Activated T-helper 2 cell treated with anti-CD3 and anti-CD28 coated beads, Interferon-gamma antibody, Interleukin-2, Interleukin-4, amounts not matched to agents 10 μg/mL and 5 μg/mL and 100 μg/mL, durations not matched to agents 14 hours and 24 hours and 36 hours (primary cell): ENCODE measurements at regions of chr2 and their contacts with region 1.

Region 1: DNA sequence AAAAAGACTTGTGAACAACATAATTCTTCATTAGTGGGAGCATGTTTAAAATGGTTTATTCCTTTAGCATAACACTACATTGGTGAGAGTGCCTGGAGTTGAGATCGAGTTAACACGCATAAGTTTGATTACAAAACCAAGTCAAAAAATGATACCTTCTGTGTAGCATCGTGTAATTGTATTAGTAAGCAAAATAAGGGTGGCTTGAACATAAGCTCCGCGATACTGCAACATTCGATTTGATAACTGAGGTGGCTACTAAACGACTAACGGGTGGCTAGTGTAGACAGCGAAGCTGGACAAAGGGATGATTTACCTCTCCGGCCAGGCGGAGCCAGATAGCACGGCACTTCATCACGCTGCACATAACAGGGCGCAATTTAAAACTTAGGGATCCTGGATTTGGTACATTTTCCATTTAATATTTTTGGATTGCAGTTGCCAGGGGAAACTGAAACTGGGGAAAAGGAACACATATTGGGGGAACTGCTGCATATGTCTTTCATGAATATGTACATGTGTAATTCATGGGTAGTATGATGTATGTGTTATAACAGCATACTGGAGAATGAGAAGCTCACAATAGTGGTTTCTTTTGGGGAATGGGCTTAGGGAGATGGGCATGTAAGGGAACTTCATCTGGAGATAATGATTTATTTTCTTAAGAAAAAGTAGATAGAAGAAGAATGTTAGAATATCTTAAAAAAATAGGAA is 36.4 kb upstream of the TOGARAM2 start:
- DNase-seq: no peak
- H3K4me3 Mint-ChIP-seq: no peak overlapping the region
- H3K27ac Mint-ChIP-seq: no peak overlapping the region
- H3K4me1 Mint-ChIP-seq: peaks cover 2% of the 10 kb centered on the region
- H3K27me3 Mint-ChIP-seq: no peaks in the 10 kb centered on the region

Region 2: GRCh38 chr2:28855977-28856376 is 88.7 kb before region 1 on chr2:
- intact Hi-C with region 1: no loop called
- DNase-seq: no peak
- H3K4me3 Mint-ChIP-seq: no peak overlapping the region
- H3K27ac Mint-ChIP-seq: no peak overlapping the region
- H3K4me1 Mint-ChIP-seq: no peaks in the 10 kb centered on the region
- H3K27me3 Mint-ChIP-seq: no peaks in the 10 kb centered on the region

Region 3: GRCh38 chr2:28904802-28905499 is 39.7 kb before region 1 on chr2:
- intact Hi-C with region 1: loop called (anchors 5 kb)
- DNase-seq: no peak
- H3K4me3 Mint-ChIP-seq: no peak overlapping the region
- H3K27ac Mint-ChIP-seq: peak overlapping the region; percentile 23
- H3K4me1 Mint-ChIP-seq: peaks cover 16% of the 10 kb centered on the region
- H3K27me3 Mint-ChIP-seq: no peaks in the 10 kb centered on the region